ENCODE measurements at regions of chr6 and their contacts with region 1.

Region 1: DNA sequence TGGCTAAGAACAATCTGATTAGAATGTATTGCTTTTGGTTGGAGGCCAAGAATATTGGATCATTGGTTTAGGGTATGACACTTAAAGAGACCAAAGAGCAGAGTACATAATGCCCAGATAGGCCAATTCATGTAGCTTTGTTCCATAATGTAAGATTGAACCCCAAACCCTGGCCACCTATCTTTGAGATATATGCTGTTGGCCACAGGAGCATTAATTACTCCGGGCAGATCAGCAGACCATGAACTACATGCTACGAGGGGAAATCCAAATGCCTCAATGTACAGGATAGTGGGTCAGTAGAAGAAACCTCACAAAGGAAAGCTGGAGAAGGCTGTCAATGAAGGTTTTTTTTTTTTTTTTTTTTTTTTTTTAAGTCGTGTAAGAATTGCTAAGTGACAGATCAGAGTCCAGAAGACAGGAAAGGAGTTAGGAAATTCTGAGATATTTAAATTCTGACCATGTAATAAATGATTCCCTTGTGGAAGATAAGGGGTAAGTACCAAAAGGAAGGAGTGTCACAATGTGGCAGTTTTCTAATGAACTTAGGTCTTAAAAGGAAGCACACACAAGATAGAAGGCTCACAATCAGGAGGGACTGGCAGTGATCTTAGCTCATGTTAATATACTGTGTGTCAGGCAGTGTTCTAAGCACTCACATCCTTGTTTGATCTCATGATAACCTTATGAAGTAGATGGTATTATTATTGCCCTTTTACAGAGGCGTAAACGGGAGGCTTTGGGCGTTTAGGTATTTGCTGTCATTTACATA is 61.4 kb downstream of the CARMIL1 start:
- DNase-seq: no peak
- ATAC-seq: no peak
- H3K4me3 ChIP-seq: no peak overlapping the region
- H3K27ac ChIP-seq: no peak overlapping the region
- H3K4me1 ChIP-seq: no peaks in the 10 kb centered on the region
- H3K27me3 ChIP-seq: no peaks in the 10 kb centered on the region
- CTCF ChIP-seq: no peak

Region 2: GRCh38 chr6:25312703-25313501 is 27.7 kb before region 1 on chr6:
- CTCF ChIA-PET with region 1: interaction called, 17 read pairs
- POLR2A ChIA-PET with region 1: no interaction called
- in situ Hi-C with region 1: no loop called
- intact Hi-C with region 1: no loop called
- DNase-seq: no peak
- ATAC-seq: no peak
- H3K4me3 ChIP-seq: no peak overlapping the region
- H3K27ac ChIP-seq: no peak overlapping the region
- H3K4me1 ChIP-seq: no peaks in the 10 kb centered on the region
- H3K27me3 ChIP-seq: no peaks in the 10 kb centered on the region
- CTCF ChIP-seq: no peak

Region 3: GRCh38 chr6:25318589-25318988 is 22.0 kb before region 1 on chr6:
- CTCF ChIA-PET with region 1: interaction called, 17 read pairs
- POLR2A ChIA-PET with region 1: interaction called, 16 read pairs
- in situ Hi-C with region 1: no loop called
- intact Hi-C with region 1: no loop called
- DNase-seq: no peak
- ATAC-seq: no peak
- H3K4me3 ChIP-seq: no peak overlapping the region
- H3K27ac ChIP-seq: no peak overlapping the region
- H3K4me1 ChIP-seq: no peaks in the 10 kb centered on the region
- H3K27me3 ChIP-seq: no peaks in the 10 kb centered on the region
- CTCF ChIP-seq: no peak

Region 4: GRCh38 chr6:25389471-25389870 is 48.9 kb after region 1 on chr6:
- CTCF ChIA-PET with region 1: no interaction called
- POLR2A ChIA-PET with region 1: no interaction called
- in situ Hi-C with region 1: no loop called
- intact Hi-C with region 1: no loop called
- DNase-seq: no peak
- ATAC-seq: no peak
- H3K4me3 ChIP-seq: no peak overlapping the region
- H3K27ac ChIP-seq: no peak overlapping the region
- H3K4me1 ChIP-seq: no peaks in the 10 kb centered on the region
- H3K27me3 ChIP-seq: no peaks in the 10 kb centered on the region
- CTCF ChIP-seq: no peak

Region 5: GRCh38 chr6:25617997-25618396 is 277.4 kb after region 1 on chr6:
- CTCF ChIA-PET with region 1: no interaction called
- POLR2A ChIA-PET with region 1: no interaction called
- in situ Hi-C with region 1: no loop called
- intact Hi-C with region 1: no loop called
- DNase-seq: no peak
- ATAC-seq: no peak
- H3K4me3 ChIP-seq: no peak overlapping the region
- H3K27ac ChIP-seq: no peak overlapping the region
- H3K4me1 ChIP-seq: no peaks in the 10 kb centered on the region
- H3K27me3 ChIP-seq: peaks cover 2% of the 10 kb centered on the region; the same call in 1 of the 2 replicates
- CTCF ChIP-seq: no peak

Region 6: DNA sequence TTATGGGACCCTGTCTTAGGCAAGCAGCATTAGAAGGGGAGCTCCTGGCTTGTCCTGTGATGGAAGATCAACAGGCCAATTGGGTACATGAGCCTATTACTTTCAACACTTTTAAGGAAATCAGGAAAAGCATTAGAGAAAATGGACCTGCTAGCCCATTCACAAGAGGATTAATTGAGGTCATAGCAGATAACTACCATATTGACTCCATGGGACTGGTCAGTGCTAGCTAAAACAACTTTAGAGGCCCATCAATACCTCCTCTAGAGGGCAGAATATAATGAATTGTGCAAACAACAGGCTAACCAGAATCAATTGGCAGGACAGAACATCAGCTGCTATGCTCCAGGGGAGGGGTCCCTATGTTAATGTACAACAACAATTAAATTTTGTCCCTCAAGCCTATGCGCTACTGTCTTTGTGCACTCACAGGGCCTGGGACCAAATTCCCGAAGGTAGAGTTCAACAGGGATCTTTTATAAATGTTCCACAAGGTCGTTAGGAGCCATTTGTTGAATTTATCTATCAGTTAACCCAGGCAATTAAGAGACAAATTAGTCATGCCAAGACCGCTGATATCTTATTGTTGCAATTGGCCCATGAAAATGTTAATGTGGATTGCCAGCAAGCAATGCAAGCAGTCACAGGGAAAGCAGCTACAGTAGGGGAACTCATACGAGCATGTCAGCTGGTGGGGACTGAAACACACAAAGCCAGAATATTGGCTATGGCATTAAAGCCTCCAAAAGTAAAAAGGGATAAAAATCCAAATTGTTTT is 917.8 kb after region 1 on chr6:
- CTCF ChIA-PET with region 1: no interaction called
- POLR2A ChIA-PET with region 1: no interaction called
- in situ Hi-C with region 1: no loop called
- intact Hi-C with region 1: no loop called
- DNase-seq: no peak
- ATAC-seq: peak; percentile 65; the same call in 1 of the 2 replicates
- H3K4me3 ChIP-seq: no peak overlapping the region
- H3K27ac ChIP-seq: no peak overlapping the region
- H3K4me1 ChIP-seq: peaks cover under 1% of the 10 kb centered on the region; the same call in 1 of the 2 replicates
- H3K27me3 ChIP-seq: no peaks in the 10 kb centered on the region
- CTCF ChIP-seq: peak; percentile 52